ENCODE measurements at regions of chr19 and their contacts with region 1.

Region 1: GRCh38 chr19:588093-588740 is 1.5 kb upstream of the HCN2 start:
- H3K4me3 Mint-ChIP-seq: no peak overlapping the region
- H3K27ac Mint-ChIP-seq: no peak overlapping the region
- H3K4me1 Mint-ChIP-seq: peaks cover 11% of the 10 kb centered on the region
- H3K27me3 Mint-ChIP-seq: peaks cover 74% of the 10 kb centered on the region

Region 2: GRCh38 chr19:732148-733069 is 144.2 kb after region 1 on chr19:
- intact Hi-C with region 1: loop called (anchors 5 kb)
- H3K4me3 Mint-ChIP-seq: no peak overlapping the region
- H3K27ac Mint-ChIP-seq: no peak overlapping the region
- H3K4me1 Mint-ChIP-seq: peaks cover 17% of the 10 kb centered on the region
- H3K27me3 Mint-ChIP-seq: peaks cover 20% of the 10 kb centered on the region

Region 3: DNA sequence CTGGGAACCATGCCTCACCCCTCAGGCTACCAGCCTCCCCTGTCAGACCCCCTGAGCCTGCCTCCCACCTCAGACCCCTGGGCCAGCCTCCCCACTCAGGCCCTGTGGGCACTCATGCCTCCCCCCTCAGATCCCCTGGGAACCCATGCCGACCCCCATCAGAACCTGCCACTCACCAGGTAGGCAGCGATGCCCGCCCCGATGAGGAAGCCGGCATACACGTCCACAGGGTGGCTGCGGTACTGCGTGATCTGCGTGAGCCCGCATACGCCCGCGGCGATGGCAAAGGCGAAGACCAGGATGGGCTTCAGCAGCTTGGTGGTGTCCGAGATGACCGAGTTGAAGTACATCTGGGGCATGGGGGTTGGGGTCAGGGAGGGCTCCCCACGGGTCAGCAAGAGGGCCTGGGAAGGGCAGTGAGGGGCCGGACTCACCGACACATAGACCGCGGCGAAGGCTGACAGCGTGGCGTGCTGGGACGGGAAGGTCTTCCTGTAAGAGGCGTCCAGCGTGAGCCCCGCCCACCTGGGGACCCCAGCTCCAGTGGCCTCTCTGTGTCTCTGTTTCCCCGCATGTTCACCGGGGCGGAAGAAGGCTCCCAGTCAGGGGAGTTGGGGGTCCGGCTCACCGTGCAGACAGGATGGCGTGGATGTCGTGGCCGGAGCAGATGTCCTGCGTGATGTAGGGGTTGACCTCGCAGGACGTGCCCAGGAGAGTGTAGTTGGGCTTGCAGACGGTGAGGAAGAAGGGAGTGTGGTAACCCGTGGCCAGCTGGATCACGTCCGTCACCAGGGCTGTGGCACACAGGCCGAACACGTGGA is 226.3 kb after region 1 on chr19:
- intact Hi-C with region 1: no loop called
- H3K4me3 Mint-ChIP-seq: no peak overlapping the region
- H3K27ac Mint-ChIP-seq: no peak overlapping the region
- H3K4me1 Mint-ChIP-seq: peaks cover 9% of the 10 kb centered on the region
- H3K27me3 Mint-ChIP-seq: no peaks in the 10 kb centered on the region

Measured in dendritic cell treated with granulocyte-macrophage colony-stimulating factor and Interleukin-4, amounts not matched to agents 40 ng/mL and 50 ng/mL, for 4 days (primary cell).